ENCODE measurements at regions of chr2 and their contacts with region 1.

Region 1: DNA sequence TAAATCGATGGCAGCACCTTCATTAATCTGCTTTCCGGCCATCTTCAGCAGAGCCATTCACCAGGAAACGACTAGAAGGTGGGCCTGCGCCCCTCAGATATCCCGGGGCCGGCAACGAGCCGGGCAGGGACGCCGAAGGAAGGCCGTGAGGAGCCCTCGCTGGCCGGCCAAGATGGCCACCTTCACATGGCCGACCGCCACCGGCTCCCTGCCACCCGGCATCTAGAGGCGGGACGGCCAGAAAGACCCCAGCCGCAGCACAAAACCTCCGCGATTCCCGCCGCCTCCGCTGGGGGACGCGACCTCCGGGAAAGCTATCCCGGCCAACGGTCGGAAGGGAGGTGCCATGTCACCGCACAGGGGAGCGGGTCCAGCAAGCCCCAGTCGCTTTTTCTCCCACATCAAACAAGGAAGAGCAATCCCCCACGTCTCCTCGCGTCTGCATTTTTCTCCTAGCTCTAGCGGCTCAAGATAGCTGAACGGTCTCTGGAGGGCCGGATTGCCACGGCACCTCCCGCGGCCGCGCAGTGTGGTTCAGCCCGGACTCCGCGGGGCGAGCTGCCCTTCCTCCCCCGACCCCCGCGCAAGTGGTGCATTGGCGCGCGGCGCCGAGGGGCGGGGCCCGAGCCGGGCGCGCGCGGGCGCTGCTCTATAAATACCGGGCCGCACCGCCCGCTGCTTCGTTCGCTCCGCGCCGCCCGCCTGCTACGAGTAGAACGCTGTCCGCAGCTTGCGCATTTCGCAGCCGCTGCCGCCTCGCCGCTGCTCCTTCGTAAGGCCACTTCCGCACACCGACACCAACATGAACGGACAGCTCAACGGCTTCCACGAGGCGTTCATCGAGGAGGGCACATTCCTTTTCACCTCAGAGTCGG is at the start of gene MAT2A:
- DNase-seq: peak; percentile 97
- H3K4me3 ChIP-seq: peak within 1 kb of the TSS; percentile 91 to 96 (median 96)
- H3K27ac ChIP-seq: peak within 1 kb of the TSS; percentile 99 to 100 (median 99)
- H3K4me1 ChIP-seq: peaks cover 0 to 51% (median 49%) of the 10 kb centered on the region in 4 donors
- H3K27me3 ChIP-seq: no peaks in the 10 kb centered on the region
- CTCF ChIP-seq: peak; percentile 68 to 83 (median 78)
- EP300 ChIP-seq: no peak
- POLR2A ChIP-seq: peak; percentile 96 to 97
- total RNA-seq, gene MAT2A: 139 to 249 (median 151) TPM

Region 2: GRCh38 chr2:85354286-85355072 is 184.2 kb before region 1 on chr2 and contains the starts of genes ELMOD3 and RETSAT:
- intact Hi-C with region 1: loop called (anchors 1 kb)
- DNase-seq: peak; percentile 99
- H3K4me3 ChIP-seq: peak within 1 kb of the TSS; percentile 56 to 83 (median 64)
- H3K27ac ChIP-seq: peak within 1 kb of the TSS; percentile 80 to 88 (median 84)
- H3K4me1 ChIP-seq: peaks cover 0 to 44% (median 27%) of the 10 kb centered on the region in 4 donors
- H3K27me3 ChIP-seq: no peaks in the 10 kb centered on the region
- CTCF ChIP-seq: no peak
- EP300 ChIP-seq: no peak
- POLR2A ChIP-seq: peak; percentile 77 to 91
- total RNA-seq, gene ELMOD3: 16.7 to 26.3 (median 22.9) TPM
- total RNA-seq, gene RETSAT: 26.5 to 54.6 (median 42.1) TPM

Region 3: GRCh38 chr2:85420536-85421259 is 118.0 kb before region 1 on chr2:
- intact Hi-C with region 1: loop called (anchors 2 kb)
- DNase-seq: peak; percentile 94
- H3K4me3 ChIP-seq: peak overlapping the region in 2 of 4 donors; percentile 3 to 10
- H3K27ac ChIP-seq: peak overlapping the region; percentile 66 to 94 (median 93)
- H3K4me1 ChIP-seq: peaks cover 0 to 32% (median 30%) of the 10 kb centered on the region in 4 donors
- H3K27me3 ChIP-seq: no peaks in the 10 kb centered on the region
- CTCF ChIP-seq: peak; percentile 99 to 100 (median 100)
- EP300 ChIP-seq: no peak
- POLR2A ChIP-seq: no peak

Region 4: DNA sequence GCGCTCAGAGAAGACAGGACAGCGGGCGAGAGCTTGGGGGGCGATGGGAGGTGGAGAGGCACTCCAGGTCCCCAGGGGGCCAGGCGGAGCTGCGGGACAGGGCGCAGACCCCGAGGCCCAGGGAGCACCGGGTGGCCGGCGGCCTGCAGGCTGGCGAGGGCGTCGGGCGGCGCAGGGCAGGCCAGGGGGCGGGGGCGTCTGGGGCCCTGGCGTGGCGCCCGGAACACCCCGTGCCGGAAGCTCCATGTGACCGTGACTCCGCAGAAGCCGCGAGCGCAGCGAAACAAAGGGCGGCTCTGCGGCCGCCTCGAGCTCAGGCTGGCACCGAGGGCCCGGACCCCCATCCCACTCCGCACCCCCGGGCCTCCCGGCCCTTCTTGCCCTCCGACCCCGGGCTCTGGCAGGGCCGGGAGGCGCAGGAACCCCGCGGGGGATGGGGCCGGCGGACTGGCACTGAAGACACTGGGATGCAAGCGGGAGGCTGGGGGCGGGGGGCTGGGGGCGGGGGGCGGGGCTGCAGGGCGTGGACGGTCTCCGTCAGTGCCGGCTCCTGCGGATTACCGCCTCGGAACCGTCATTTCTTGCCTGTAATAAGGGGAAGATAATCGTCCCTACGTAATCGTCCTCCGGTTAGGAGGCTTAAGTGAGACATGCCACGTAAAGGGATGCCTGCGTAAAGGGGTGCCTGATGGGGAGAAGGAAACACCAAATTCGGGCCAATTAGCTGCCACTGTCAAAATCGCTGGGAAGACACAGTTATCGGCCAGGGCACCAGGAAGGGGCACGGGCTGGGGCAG is 101.0 kb before region 1 on chr2:
- intact Hi-C with region 1: loop called (anchors 1 kb)
- DNase-seq: peak; percentile 96
- H3K4me3 ChIP-seq: peak overlapping the region; percentile 34 to 51 (median 48)
- H3K27ac ChIP-seq: peak overlapping the region; percentile 93 to 97 (median 95)
- H3K4me1 ChIP-seq: peaks cover 0 to 64% (median 57%) of the 10 kb centered on the region in 4 donors
- H3K27me3 ChIP-seq: no peaks in the 10 kb centered on the region
- CTCF ChIP-seq: no peak
- EP300 ChIP-seq: peak in 3 of 4 donors; percentile 88 to 96 (median 92)
- POLR2A ChIP-seq: peak; percentile 83 to 87

Region 5: DNA sequence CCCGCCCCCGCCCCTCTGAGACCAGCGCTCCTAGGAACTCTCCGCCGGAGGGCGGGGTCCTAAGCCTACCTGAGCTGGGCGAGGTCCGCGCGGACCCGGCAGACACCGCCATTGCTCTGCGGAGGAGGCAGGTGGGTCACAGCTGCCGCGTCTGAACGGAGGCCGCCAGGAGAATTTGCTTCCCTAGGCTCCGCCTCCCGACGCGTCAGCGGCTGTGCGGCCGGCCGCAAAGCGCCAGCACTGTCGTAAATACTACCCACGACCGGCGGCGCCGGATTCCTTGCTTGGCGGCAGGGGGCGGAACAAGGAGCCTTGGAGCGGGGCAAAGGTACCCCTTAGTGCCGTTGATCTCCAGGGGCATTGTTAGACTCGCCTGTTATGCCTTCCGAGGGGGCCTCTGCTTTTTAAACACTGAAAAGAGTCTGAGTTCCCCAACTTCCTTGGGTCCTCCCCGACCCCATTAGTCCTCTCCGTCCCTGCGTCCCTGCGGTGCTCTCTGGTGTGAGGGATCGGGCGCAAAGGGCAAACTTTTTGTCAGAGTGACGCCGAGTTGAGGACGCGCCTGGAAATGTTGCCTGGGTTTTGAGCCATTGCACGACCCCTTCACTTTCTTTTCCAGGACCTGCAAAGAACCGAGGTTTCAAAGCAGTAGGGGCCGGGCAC is 22.7 kb after region 1 on chr2 and contains the start of gene GGCX:
- intact Hi-C with region 1: loop called (anchors 2 kb)
- DNase-seq: peak; percentile 97
- H3K4me3 ChIP-seq: peak within 1 kb of the TSS; percentile 67 to 86 (median 78)
- H3K27ac ChIP-seq: peak within 1 kb of the TSS; percentile 85 to 90 (median 88)
- H3K4me1 ChIP-seq: peaks cover 0 to 23% (median 17%) of the 10 kb centered on the region in 4 donors
- H3K27me3 ChIP-seq: no peaks in the 10 kb centered on the region
- CTCF ChIP-seq: peak in 1 of 4 experiments; percentile 26
- EP300 ChIP-seq: peak in 1 of 4 donors; percentile 69
- POLR2A ChIP-seq: peak; percentile 75 to 83
- total RNA-seq, gene GGCX: 14.9 to 25.3 (median 24.7) TPM